Ascending aorta (tissue), 2 donors: ENCODE measurements at regions of chr12 and their contacts with region 1.

Region 1: DNA sequence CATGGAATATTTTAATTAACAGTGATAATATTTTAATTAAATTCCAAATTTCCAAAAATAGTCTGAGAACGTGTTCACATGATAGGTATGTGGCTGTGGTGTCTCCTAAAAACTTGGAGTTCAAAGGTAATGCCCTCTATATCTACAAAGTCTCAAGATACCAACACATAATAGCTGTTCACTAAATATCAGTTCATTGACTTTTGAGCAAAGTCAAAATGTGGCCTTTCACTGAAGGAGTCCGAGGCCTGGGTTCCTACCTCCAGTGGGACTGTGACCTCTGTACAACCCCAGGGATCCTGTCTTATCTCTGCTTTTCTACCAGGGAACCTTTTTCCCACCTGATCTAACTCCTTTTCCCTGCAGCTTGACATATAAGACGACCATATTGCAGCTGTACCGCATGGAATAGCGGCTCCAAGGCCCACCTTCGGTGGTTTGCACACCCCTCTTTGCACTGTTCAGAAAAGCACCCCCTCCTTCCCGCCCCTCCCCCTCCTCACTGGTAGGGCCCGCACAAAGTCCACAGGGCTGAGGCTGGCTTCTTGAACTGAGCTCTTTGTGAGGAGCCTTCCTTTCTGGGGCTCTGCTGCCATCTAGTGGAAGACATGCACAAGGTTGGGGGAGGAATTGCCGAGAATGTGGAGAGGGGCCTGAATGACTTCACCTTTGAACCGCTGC is 3.1 kb downstream of the CCND2 start:
- DNase-seq: peak; percentile 63 to 95
- H3K4me3 ChIP-seq: peak overlapping the region; percentile 78 to 87
- H3K27ac ChIP-seq: peak overlapping the region; percentile 92 to 96
- H3K4me1 ChIP-seq: peaks cover 12 to 50% of the 10 kb centered on the region in 2 donors
- H3K27me3 ChIP-seq: no peaks in the 10 kb centered on the region
- CTCF ChIP-seq: peak; percentile 90 to 96 (median 92)

Region 2: GRCh38 chr12:3299929-3300832 is 976.5 kb before region 1 on chr12:
- intact Hi-C with region 1: loop called (anchors 5 kb)
- DNase-seq: peak; percentile 62 to 90
- H3K4me3 ChIP-seq: peak overlapping the region; percentile 41 to 54
- H3K27ac ChIP-seq: peak overlapping the region; percentile 31 to 39
- H3K4me1 ChIP-seq: peaks cover 8 to 25% of the 10 kb centered on the region in 2 donors
- H3K27me3 ChIP-seq: no peaks in the 10 kb centered on the region
- CTCF ChIP-seq: peak; percentile 90 to 98 (median 98)

Region 3: GRCh38 chr12:3409662-3410061 is 867.0 kb before region 1 on chr12:
- intact Hi-C with region 1: no loop called
- DNase-seq: no peak
- H3K4me3 ChIP-seq: no peak overlapping the region
- H3K27ac ChIP-seq: no peak overlapping the region
- H3K4me1 ChIP-seq: no peaks in the 10 kb centered on the region
- H3K27me3 ChIP-seq: no peaks in the 10 kb centered on the region
- CTCF ChIP-seq: no peak

Region 4: DNA sequence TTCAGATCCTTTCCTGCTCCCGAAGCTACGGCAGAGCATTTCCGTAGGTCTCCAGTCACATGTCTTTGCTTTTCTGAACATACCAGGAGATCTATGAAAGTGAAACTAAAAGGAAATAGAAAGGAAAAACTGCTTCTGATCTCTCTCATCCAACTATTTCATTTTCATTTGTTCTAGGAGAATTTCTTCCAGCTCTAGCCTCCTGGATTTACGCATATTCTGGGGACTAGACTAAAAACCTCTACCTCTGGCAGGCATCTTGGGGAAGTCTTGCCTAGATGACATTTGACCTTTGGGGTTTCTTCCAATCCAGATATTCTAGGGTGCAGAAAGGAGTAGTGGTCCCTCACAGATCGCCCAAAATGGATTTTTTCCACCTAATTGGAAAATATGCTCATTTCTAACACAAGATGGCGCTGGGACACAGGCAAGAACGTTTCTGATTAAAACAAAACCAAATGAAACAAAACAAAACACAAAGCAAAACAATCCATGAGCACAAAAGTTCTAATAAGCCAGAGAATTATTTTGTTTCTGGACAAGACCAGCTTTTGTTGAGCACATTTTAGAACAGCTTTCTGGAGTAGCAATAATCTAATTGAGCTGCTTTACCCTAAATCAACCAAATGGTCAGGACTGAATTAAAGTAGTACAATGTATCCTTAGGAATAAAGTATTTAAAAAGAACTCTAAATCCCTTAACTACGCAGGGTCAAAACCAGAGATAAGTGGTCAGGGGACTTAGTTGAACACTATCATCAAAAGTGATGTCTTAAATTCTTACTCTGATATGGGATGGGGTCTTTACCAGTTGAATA is 391.2 kb before region 1 on chr12:
- intact Hi-C with region 1: loop called (anchors 2 kb)
- DNase-seq: peak in 1 of 2 donors; percentile 67
- H3K4me3 ChIP-seq: peak overlapping the region; percentile 45 to 58
- H3K27ac ChIP-seq: peak overlapping the region; percentile 71 to 81
- H3K4me1 ChIP-seq: peaks cover 0 to 2% of the 10 kb centered on the region in 2 donors
- H3K27me3 ChIP-seq: no peaks in the 10 kb centered on the region
- CTCF ChIP-seq: peak; percentile 77 to 86 (median 80)

Region 5: GRCh38 chr12:4037747-4038312 is 238.8 kb before region 1 on chr12:
- intact Hi-C with region 1: loop called (anchors 1 kb)
- DNase-seq: no peak
- H3K4me3 ChIP-seq: no peak overlapping the region
- H3K27ac ChIP-seq: no peak overlapping the region
- H3K4me1 ChIP-seq: no peaks in the 10 kb centered on the region
- H3K27me3 ChIP-seq: no peaks in the 10 kb centered on the region
- CTCF ChIP-seq: peak; percentile 59 to 77 (median 63)